ENCODE measurements at regions of chr17 and their contacts with region 1.

Region 1: GRCh38 chr17:76714822-76715495 is 4.2 kb upstream of the MXRA7 start:
- DNase-seq: peak; percentile 50 to 73 (median 68)
- H3K4me3 ChIP-seq: peak overlapping the region in 1 of 3 experiments; percentile 45
- H3K4me3 Mint-ChIP-seq: peak overlapping the region; percentile 61 to 78
- H3K27ac ChIP-seq: peak overlapping the region; percentile 88 to 90
- H3K27ac Mint-ChIP-seq: peak overlapping the region; percentile 94 to 98 (median 96)
- H3K4me1 ChIP-seq: peaks cover 40% of the 10 kb centered on the region in 2 donors
- H3K4me1 Mint-ChIP-seq: peaks cover 36% of the 10 kb centered on the region
- H3K27me3 ChIP-seq: peaks cover 8 to 9% of the 10 kb centered on the region in 2 donors
- H3K27me3 Mint-ChIP-seq: peaks cover 10 to 17% (median 11%) of the 10 kb centered on the region in 3 donors
- CTCF ChIP-seq: peak; percentile 98

Region 2: GRCh38 chr17:76501018-76501826 is 213.7 kb before region 1 on chr17 and contains the start of gene RHBDF2:
- intact Hi-C with region 1: loop called in 1 of 2 experiments (anchors 10 kb)
- DNase-seq: peak; percentile 91 to 96 (median 94)
- H3K4me3 ChIP-seq: peak within 1 kb of the TSS; percentile 80 to 99 (median 97)
- H3K4me3 Mint-ChIP-seq: peak within 1 kb of the TSS; percentile 88 to 95
- H3K27ac ChIP-seq: peak within 1 kb of the TSS; percentile 91 to 97
- H3K27ac Mint-ChIP-seq: peak within 1 kb of the TSS; percentile 95 to 99 (median 98)
- H3K4me1 ChIP-seq: peaks cover 72 to 81% of the 10 kb centered on the region in 2 donors
- H3K4me1 Mint-ChIP-seq: peaks cover 75% of the 10 kb centered on the region
- H3K27me3 ChIP-seq: no peaks in the 10 kb centered on the region
- H3K27me3 Mint-ChIP-seq: peaks cover 0 to 3% (median 0%) of the 10 kb centered on the region in 3 donors
- CTCF ChIP-seq: no peak
- polyA plus RNA-seq, gene RHBDF2: 36.9 to 124 (median 68.6) TPM

Region 3: GRCh38 chr17:76671123-76671911 is 43.6 kb before region 1 on chr17:
- intact Hi-C with region 1: loop called (anchors 2 to 10 kb)
- DNase-seq: peak; percentile 99 to 100 (median 100)
- H3K4me3 ChIP-seq: peak overlapping the region; percentile 66 to 90 (median 87)
- H3K4me3 Mint-ChIP-seq: peak overlapping the region; percentile 81 to 94
- H3K27ac ChIP-seq: peak overlapping the region; percentile 64 to 86
- H3K27ac Mint-ChIP-seq: peak overlapping the region; percentile 82 to 96 (median 92)
- H3K4me1 ChIP-seq: peaks cover 12 to 15% of the 10 kb centered on the region in 2 donors
- H3K4me1 Mint-ChIP-seq: peaks cover 18% of the 10 kb centered on the region
- H3K27me3 ChIP-seq: no peaks in the 10 kb centered on the region
- H3K27me3 Mint-ChIP-seq: peaks cover 4 to 7% (median 7%) of the 10 kb centered on the region in 3 donors
- CTCF ChIP-seq: no peak